Right ventricle myocardium inferior (tissue), 1 donor: ENCODE measurements at regions of chr3 and their contacts with region 1.

Region 1: GRCh38 chr3:64484289-64484992 is 203.4 kb downstream of the ADAMTS9 start:
- DNase-seq: no peak
- ATAC-seq: peak; percentile 94

Region 2: DNA sequence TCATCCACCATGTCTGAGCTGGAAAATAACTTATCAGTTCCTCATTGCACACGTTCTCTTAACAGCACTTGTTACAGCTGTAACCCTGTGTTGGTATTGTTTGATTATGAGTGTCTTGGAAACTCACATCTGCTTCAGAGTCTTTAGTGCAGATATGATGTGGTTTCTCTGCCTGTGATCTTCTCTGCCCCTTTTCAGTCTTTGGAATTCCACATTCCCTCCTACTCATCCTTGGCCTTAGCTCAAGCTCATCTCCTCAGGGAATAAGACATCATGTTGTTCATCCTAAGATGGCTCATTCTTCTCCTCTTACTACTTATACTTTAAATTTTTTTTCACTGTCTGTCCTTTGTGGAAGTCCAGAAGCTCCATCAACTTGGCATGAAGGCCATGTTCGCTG is 1128.6 kb before region 1 on chr3:
- intact Hi-C with region 1: no loop called
- DNase-seq: no peak
- ATAC-seq: no peak

Region 3: DNA sequence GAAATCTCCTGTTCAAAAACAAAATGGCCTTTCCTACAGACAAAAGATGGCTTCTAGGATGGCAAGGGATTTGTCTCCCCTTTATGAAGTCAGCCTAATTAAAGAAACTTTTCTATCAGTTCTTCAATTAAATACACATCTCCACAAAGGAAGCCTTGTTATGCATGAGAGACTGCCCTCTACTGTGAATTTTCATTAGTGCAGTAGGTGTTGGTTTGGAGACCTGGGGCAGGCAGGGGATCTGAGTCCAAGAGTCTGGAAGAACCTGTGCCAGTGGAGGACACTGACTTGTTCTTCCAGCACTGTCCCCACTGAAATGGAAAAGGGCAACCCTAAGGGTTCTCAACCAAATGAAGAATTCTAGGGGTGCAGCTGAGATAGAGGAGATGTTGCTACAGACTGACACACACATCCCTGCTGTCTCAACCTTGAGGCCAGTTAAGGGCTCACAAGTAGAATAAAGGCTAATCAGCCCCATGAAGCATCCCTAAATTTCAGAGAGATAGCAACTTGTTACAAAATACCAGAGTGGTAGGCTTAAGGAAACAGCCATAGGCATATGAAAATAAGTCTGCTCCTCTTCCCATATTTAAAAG is 85.1 kb before region 1 on chr3:
- intact Hi-C with region 1: loop called (anchors 5 kb)
- DNase-seq: no peak
- ATAC-seq: peak; percentile 67